Posterior vena cava (tissue), 2 donors: ENCODE measurements at regions of chr4 and their contacts with region 1.

Region 1: DNA sequence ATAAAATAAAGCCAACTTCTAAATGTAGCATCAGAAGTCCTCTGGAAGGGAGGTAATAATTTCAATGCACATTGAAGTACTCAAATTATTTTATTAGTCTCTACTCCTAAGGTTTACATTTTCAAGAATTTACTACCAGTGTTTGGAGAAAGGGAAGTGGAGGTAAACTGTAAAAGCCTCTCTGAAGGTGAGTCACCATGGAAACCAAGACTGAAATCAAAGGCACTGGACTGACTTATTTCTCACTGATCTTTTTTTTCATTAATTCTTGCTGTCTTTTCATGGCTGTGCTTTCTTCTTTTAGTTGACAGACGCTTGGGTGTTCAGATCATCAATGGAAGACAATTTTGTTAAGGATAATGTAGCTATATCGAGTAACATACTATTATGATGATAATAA is 9.7 kb downstream of the SLC39A8 start:
- DNase-seq: no peak

Region 2: GRCh38 chr4:102299354-102300107 is 36.1 kb before region 1 on chr4:
- intact Hi-C with region 1: loop called in 1 of 2 experiments (anchors 2 kb)
- DNase-seq: peak; percentile 78

Region 3: GRCh38 chr4:102321260-102321995 is 14.2 kb before region 1 on chr4:
- intact Hi-C with region 1: no loop called
- DNase-seq: no peak

Region 4: DNA sequence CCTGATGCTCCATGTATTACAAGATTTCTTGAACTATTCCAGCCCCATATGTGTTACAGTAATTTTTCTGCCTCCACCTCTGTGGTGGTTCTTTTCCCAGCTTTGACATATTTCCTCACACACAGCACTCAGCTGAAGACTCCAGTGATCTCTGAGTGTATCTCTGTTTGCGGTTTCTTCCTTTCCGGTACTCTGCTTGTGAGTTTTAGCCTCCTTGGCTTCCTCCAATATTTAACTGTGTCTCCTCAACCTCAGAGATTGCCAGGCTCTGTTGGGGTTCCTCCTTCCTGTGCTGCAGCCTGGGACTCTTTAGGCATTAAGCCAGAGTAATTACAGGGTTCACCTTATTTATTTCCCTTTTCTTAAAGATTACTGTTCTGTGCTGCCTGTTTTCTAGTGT is 238.7 kb after region 1 on chr4:
- intact Hi-C with region 1: no loop called
- DNase-seq: no peak